ENCODE measurements at regions of chr12 and their contacts with region 1.

Region 1: DNA sequence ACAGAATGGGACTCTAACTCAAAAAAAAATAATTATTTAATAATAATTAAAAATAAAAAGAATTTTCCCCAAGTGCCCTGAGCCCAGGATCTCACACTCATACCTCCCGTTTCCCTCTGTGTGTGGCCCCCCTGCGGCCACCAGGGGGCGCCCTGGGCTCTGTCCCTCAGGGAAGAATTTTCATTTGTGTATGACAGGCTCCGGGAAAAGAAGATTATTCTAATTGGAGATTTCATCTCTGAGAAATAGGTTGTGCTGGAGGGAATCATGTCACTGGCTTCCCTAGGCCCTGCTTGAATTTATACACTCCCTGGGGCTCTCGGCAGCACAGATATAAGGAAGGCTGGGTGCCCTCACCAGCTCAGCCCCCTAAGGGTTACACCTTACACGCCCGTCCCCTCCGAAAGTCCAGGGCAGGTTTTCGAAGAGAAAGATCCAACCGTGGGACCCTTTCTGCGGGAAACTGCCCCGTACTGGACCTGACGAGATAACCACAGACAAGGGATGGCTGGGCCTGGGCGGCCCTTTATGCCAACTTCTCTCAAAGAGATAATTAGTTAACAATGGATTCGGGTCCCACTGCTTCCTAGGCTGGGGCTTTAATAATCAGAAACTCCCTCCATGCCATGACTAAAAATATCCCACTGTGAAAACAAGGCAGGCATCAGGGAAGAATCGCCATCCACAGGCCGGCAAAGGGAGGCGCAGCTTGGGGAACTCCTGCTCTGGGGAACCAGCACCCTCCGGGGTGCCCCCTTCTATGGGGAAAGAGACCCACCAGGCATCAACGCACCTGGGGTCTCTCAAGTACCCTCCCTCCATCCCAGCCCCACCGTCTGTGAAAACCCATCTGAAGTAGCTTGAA is 80.7 kb downstream of the KDM2B start:
- DNase-seq: peak; percentile 44 to 80 (median 68)
- ATAC-seq: peak; percentile 93
- H3K4me3 ChIP-seq: no peak overlapping the region
- H3K4me3 Mint-ChIP-seq: no peak overlapping the region
- H3K27ac ChIP-seq: no peak overlapping the region
- H3K27ac Mint-ChIP-seq: peak overlapping the region in 2 of 9 donors; percentile 8 to 32
- H3K4me1 ChIP-seq: peaks cover 0 to 11% of the 10 kb centered on the region in 2 donors
- H3K4me1 Mint-ChIP-seq: peaks cover 0 to 19% (median 13%) of the 10 kb centered on the region in 7 donors
- H3K27me3 ChIP-seq: no peaks in the 10 kb centered on the region
- H3K27me3 Mint-ChIP-seq: no peaks in the 10 kb centered on the region

Region 2: GRCh38 chr12:121255433-121255832 is 244.7 kb before region 1 on chr12:
- CTCF ChIA-PET with region 1: no interaction called
- POLR2A ChIA-PET with region 1: no interaction called
- intact Hi-C with region 1: no loop called
- DNase-seq: no peak
- ATAC-seq: no peak
- H3K4me3 ChIP-seq: no peak overlapping the region
- H3K4me3 Mint-ChIP-seq: no peak overlapping the region
- H3K27ac ChIP-seq: no peak overlapping the region
- H3K27ac Mint-ChIP-seq: peak overlapping the region in 1 of 9 donors; percentile 33
- H3K4me1 ChIP-seq: no peaks in the 10 kb centered on the region
- H3K4me1 Mint-ChIP-seq: peaks cover 0 to 5% (median 0%) of the 10 kb centered on the region in 7 donors
- H3K27me3 ChIP-seq: no peaks in the 10 kb centered on the region
- H3K27me3 Mint-ChIP-seq: no peaks in the 10 kb centered on the region

Region 3: DNA sequence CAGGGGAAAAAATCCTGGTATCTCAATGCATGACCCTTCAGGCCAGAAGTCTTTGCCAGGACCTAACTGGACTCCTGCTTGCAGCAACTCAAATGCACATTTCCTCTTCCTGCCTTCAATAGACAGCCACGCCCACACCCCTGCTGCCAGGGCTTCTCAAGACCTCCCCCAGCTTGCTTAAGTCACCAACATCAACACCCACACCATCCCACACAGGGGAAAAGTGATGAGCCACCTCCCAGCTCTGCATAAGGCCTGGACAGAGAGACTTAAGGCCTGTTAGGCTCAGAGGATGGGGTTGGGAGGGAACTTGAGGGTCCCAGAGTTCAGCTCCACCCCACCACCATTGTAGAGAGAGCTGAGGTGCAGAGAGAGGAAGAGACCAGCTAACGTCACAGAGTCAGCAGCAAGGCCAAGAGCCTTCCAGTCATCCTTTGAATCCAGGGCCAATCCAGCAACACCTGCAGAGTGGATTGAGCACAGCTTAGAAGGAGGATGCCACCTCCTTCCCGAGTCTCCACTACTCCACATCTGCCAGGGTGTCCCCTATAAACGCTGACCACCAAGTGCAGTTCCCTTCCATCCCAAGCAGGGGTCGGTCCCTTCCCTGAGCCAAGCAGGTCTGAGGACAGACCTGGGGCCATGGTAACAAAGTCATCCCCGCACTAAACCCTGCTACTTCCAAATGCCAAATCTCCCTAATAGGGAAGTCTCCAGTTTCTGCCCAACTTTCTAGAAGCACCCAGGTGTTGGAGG is 30.6 kb after region 1 on chr12:
- CTCF ChIA-PET with region 1: interaction called, 5 read pairs
- POLR2A ChIA-PET with region 1: no interaction called
- intact Hi-C with region 1: loop called in 1 of 2 experiments (anchors 2 kb)
- DNase-seq: peak; percentile 33 to 77 (median 68)
- ATAC-seq: peak; percentile 78
- H3K4me3 ChIP-seq: peak overlapping the region; percentile 12
- H3K4me3 Mint-ChIP-seq: peak overlapping the region; percentile 50 to 78 (median 66)
- H3K27ac ChIP-seq: peak overlapping the region; percentile 67
- H3K27ac Mint-ChIP-seq: peak overlapping the region; percentile 71 to 94 (median 87)
- H3K4me1 ChIP-seq: peaks cover 26 to 35% of the 10 kb centered on the region in 2 donors
- H3K4me1 Mint-ChIP-seq: peaks cover 25 to 61% (median 41%) of the 10 kb centered on the region in 7 donors
- H3K27me3 ChIP-seq: no peaks in the 10 kb centered on the region
- H3K27me3 Mint-ChIP-seq: no peaks in the 10 kb centered on the region

Region 4: DNA sequence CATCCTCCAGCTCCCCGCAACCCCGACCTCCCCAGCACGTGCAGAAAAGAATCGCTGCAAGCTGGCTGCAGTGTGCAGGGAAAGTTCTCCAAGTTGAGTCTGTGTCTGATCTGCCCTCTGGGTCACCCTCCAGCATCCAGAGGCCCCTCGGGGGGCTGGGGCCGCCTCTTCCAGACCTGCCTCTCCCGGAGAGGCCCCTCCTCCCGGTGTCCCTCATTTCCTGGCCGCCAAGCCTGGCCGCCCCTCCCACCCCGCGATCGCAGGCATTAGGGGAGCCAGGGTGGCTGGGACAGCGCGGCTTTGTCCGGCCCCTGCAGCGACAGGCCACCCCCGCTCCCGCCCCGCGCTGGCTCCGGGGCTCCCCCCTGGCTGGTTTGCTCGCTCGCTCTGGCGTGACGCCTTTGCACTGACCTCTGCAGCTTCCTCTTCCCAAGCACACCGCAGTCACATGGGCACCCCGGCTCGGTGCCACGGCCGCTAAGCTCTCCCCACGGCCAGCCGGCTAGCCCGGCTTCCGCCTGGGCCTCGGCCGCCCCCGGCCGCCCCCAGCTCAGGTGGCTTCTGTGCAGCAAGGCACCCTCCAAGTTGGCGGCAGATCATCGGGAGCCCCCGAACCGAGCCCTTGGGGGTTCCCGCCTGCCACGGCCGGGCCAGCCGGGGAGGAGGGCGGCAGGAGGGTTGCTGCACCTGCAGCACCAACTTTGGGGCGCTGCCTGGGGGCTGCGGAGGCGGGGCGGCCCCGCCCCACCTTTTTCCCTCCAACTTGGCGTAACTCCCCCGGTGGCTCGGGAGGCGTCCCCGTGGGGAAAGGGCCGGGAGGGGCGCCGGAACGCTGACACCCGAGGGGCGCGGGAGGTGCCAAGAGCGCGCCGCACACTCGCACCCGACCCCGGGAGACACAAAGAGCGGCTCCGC is 37.0 kb after region 1 on chr12:
- CTCF ChIA-PET with region 1: interaction called, 5 read pairs
- POLR2A ChIA-PET with region 1: no interaction called
- intact Hi-C with region 1: loop called in 1 of 2 experiments (anchors 1 kb)
- DNase-seq: peak in 8 of 9 donors; percentile 20 to 70 (median 28)
- ATAC-seq: peak; percentile 51
- H3K4me3 ChIP-seq: peak overlapping the region; percentile 62
- H3K4me3 Mint-ChIP-seq: peak overlapping the region; percentile 51 to 91 (median 81)
- H3K27ac ChIP-seq: peak overlapping the region; percentile 74
- H3K27ac Mint-ChIP-seq: peak overlapping the region; percentile 43 to 97 (median 92)
- H3K4me1 ChIP-seq: peaks cover 29 to 36% of the 10 kb centered on the region in 2 donors
- H3K4me1 Mint-ChIP-seq: peaks cover 21 to 56% (median 44%) of the 10 kb centered on the region in 7 donors
- H3K27me3 ChIP-seq: no peaks in the 10 kb centered on the region
- H3K27me3 Mint-ChIP-seq: peaks cover 0 to 4% (median 0%) of the 10 kb centered on the region in 5 donors

Region 5: DNA sequence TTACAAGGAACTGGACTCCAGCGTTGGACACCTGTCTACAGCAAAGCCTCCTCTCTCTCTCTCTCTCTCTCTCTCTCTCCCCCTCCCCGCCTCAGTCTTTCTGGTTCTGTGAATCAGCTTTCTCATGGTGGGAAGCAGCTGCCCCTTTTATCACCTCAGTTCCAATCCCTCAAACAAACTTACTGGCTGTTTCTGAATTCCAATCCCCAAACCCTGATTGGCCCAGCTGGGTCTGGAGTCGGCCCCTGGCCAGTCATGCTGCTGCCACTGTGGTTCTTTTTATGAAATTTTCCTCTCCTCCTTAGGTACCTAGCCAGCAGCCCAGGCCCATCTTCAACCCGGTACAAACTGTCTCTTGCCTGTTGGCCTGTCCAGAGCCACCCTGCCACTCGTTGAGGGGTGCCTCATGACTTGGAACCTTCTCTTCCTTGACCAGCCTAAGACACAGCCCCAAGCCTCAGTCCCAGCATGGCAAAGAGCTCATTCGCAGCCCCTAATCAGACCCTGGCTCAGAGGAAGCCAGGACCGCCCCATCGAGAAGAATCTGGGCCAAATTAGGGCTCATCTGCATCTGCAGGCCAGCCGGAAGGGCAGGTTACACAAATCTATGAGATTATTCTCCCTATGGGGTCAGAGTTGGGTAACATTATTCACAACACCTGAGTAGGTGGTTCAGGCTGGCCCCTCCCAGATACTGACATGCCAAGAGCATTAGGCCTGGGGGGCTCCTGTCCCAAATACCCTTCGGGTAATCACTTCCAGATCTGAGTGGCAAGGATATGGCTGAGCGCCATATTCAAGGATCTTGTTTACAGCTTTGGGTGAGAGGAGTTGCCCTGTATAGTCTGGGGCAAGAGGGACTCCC is 178.8 kb after region 1 on chr12:
- CTCF ChIA-PET with region 1: interaction called, 5 read pairs
- POLR2A ChIA-PET with region 1: no interaction called
- intact Hi-C with region 1: loop called in 1 of 2 experiments (anchors 1 kb)
- DNase-seq: no peak
- ATAC-seq: no peak
- H3K4me3 ChIP-seq: no peak overlapping the region
- H3K4me3 Mint-ChIP-seq: no peak overlapping the region
- H3K27ac ChIP-seq: no peak overlapping the region
- H3K27ac Mint-ChIP-seq: peak overlapping the region in 3 of 9 donors; percentile 34 to 59 (median 57)
- H3K4me1 ChIP-seq: no peaks in the 10 kb centered on the region
- H3K4me1 Mint-ChIP-seq: peaks cover 4 to 14% (median 6%) of the 10 kb centered on the region in 7 donors
- H3K27me3 ChIP-seq: no peaks in the 10 kb centered on the region
- H3K27me3 Mint-ChIP-seq: no peaks in the 10 kb centered on the region